Naive thymus-derived CD8-positive, alpha-beta T cell (primary cell): ENCODE measurements at regions of chr17 and their contacts with region 1.

Region 1: GRCh38 chr17:51153210-51154072 is at the start of gene NME1:
- DNase-seq: peak; percentile 89 to 99 (median 98)
- ATAC-seq: peak; percentile 91 to 97
- H3K4me3 Mint-ChIP-seq: no peak within 1 kb of the TSS
- H3K27ac Mint-ChIP-seq: no peak within 1 kb of the TSS
- H3K4me1 Mint-ChIP-seq: peaks cover 0 to 12% (median 5%) of the 10 kb centered on the region in 4 donors
- H3K27me3 Mint-ChIP-seq: no peaks in the 10 kb centered on the region
- polyA plus RNA-seq, gene NME1: 64.6 to 95.2 (median 82.1) TPM

Region 2: GRCh38 chr17:51000835-51001638 is 152.4 kb before region 1 on chr17:
- POLR2A ChIA-PET with region 1: interaction called, 34 read pairs
- DNase-seq: peak in 6 of 10 donors; percentile 30 to 74 (median 66)
- ATAC-seq: peak; percentile 78 to 85
- H3K4me3 Mint-ChIP-seq: no peak overlapping the region
- H3K27ac Mint-ChIP-seq: peak overlapping the region in 2 of 10 donors; percentile 3 to 4
- H3K4me1 Mint-ChIP-seq: peaks cover 0 to 3% (median 0%) of the 10 kb centered on the region in 4 donors
- H3K27me3 Mint-ChIP-seq: no peaks in the 10 kb centered on the region

Region 3: GRCh38 chr17:51120739-51121617 is 32.5 kb before region 1 on chr17 and contains the start of gene SPAG9:
- POLR2A ChIA-PET with region 1: interaction called, 37 read pairs
- DNase-seq: peak; percentile 82 to 95 (median 90)
- ATAC-seq: peak; percentile 77 to 83
- H3K4me3 Mint-ChIP-seq: peak within 1 kb of the TSS; percentile 92 to 99 (median 96)
- H3K27ac Mint-ChIP-seq: peak within 1 kb of the TSS; percentile 94 to 100 (median 99)
- H3K4me1 Mint-ChIP-seq: peaks cover 18 to 54% (median 49%) of the 10 kb centered on the region in 4 donors
- H3K27me3 Mint-ChIP-seq: no peaks in the 10 kb centered on the region
- polyA plus RNA-seq, gene SPAG9: 2.1 to 3.9 (median 2.8) TPM

Region 4: GRCh38 chr17:51166197-51166986 is 13.0 kb after region 1 on chr17 and contains the start of gene NME2:
- POLR2A ChIA-PET with region 1: interaction called, 18 read pairs
- DNase-seq: peak; percentile 15 to 75 (median 55)
- ATAC-seq: peak; percentile 72 to 79
- H3K4me3 Mint-ChIP-seq: peak within 1 kb of the TSS; percentile 82 to 99 (median 94)
- H3K27ac Mint-ChIP-seq: peak within 1 kb of the TSS; percentile 92 to 98 (median 96)
- H3K4me1 Mint-ChIP-seq: peaks cover 11 to 36% (median 23%) of the 10 kb centered on the region in 4 donors
- H3K27me3 Mint-ChIP-seq: no peaks in the 10 kb centered on the region
- polyA plus RNA-seq, gene NME2: 286 to 385 (median 338) TPM